Thyroid gland (tissue), 4 donors: ENCODE measurements at regions of chr22 and their contacts with region 1.

Region 1: DNA sequence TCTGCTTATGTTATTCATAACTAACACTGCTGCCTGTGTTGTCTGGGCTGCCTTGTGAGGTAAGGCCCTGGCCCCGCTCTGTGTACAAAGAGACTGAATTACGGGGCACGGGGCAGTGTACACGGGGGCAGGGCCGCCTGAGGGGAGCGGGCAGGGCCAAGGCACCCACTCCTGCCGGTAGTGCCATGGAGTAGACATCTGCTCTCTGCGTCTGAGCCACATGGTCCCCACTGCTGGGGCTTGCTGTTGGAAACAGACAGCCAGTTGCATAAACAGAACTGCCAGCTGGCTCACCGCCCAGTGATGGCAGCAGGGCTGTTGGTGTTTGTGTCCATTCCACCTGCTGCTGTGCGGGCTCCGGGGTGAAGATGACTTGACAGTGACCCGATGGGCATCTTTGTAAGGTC is 19.8 kb downstream of the FAM118A start:
- DNase-seq: no peak
- H3K4me3 ChIP-seq: no peak overlapping the region
- H3K27ac ChIP-seq: no peak overlapping the region
- H3K4me1 ChIP-seq: no peaks in the 10 kb centered on the region
- H3K27me3 ChIP-seq: no peaks in the 10 kb centered on the region
- CTCF ChIP-seq: no peak
- POLR2A ChIP-seq: no peak

Region 2: GRCh38 chr22:45254789-45255278 is 74.7 kb before region 1 on chr22:
- intact Hi-C with region 1: no loop called
- DNase-seq: no peak
- H3K4me3 ChIP-seq: no peak overlapping the region
- H3K27ac ChIP-seq: no peak overlapping the region
- H3K4me1 ChIP-seq: no peaks in the 10 kb centered on the region
- H3K27me3 ChIP-seq: no peaks in the 10 kb centered on the region
- CTCF ChIP-seq: no peak
- POLR2A ChIP-seq: no peak

Region 3: GRCh38 chr22:45413368-45414211 is 84.1 kb after region 1 on chr22 and contains the starts of genes RIBC2 and SMC1B:
- intact Hi-C with region 1: no loop called
- DNase-seq: peak; percentile 63 to 71
- H3K4me3 ChIP-seq: peak within 1 kb of the TSS; percentile 2 to 24 (median 3)
- H3K27ac ChIP-seq: no peak within 1 kb of the TSS
- H3K4me1 ChIP-seq: peaks cover 7 to 12% of the 10 kb centered on the region in 2 donors
- H3K27me3 ChIP-seq: no peaks in the 10 kb centered on the region
- CTCF ChIP-seq: no peak
- POLR2A ChIP-seq: no peak
- total RNA-seq, gene RIBC2: 0.45 to 4.2 TPM in 2 of 4 donors, not detected in the others
- total RNA-seq, gene SMC1B: 0.13 TPM in 1 of 4 donors, not detected in the others

Region 4: GRCh38 chr22:45435544-45436139 is 106.1 kb after region 1 on chr22:
- intact Hi-C with region 1: loop called (anchors 10 kb)
- DNase-seq: peak; percentile 92 to 94
- H3K4me3 ChIP-seq: no peak overlapping the region
- H3K27ac ChIP-seq: peak overlapping the region in 2 of 3 donors; percentile 11 to 60
- H3K4me1 ChIP-seq: peaks cover 10 to 12% of the 10 kb centered on the region in 2 donors
- H3K27me3 ChIP-seq: no peaks in the 10 kb centered on the region
- CTCF ChIP-seq: peak; percentile 95 to 99 (median 96)
- POLR2A ChIP-seq: peak in 1 of 2 donors; percentile 13